IMR-90 (cell line): ENCODE measurements at regions of chr11 and their contacts with region 1.

Region 1: GRCh38 chr11:65540297-65541092 is 15.6 kb downstream of the SCYL1 start:
- DNase-seq: peak; percentile 82
- ATAC-seq: peak; percentile 94
- H3K4me3 ChIP-seq: peak overlapping the region; percentile 59
- H3K27ac ChIP-seq: peak overlapping the region; percentile 73
- H3K4me1 ChIP-seq: peaks cover 5% of the 10 kb centered on the region; the same call in 1 of the 2 replicates
- H3K27me3 ChIP-seq: no peaks in the 10 kb centered on the region
- CTCF ChIP-seq: peak; percentile 88
- POLR2A ChIP-seq: no peak
- RAD21 ChIP-seq: peak; percentile 77

Region 2: GRCh38 chr11:65555693-65556231 is 15.3 kb after region 1 on chr11:
- CTCF ChIA-PET with region 1: interaction called, 3 read pairs
- POLR2A ChIA-PET with region 1: no interaction called
- dilution Hi-C with region 1: no loop called
- in situ Hi-C with region 1: no loop called
- intact Hi-C with region 1: loop called (anchors 1 kb)
- DNase-seq: peak; percentile 88
- ATAC-seq: peak; percentile 45
- H3K4me3 ChIP-seq: no peak overlapping the region
- H3K27ac ChIP-seq: peak overlapping the region; percentile 9; the same call in 1 of the 2 replicates
- H3K4me1 ChIP-seq: peaks cover 38% of the 10 kb centered on the region
- H3K27me3 ChIP-seq: no peaks in the 10 kb centered on the region
- CTCF ChIP-seq: no peak
- POLR2A ChIP-seq: no peak
- RAD21 ChIP-seq: no peak